Activated T-helper 1 cell treated with anti-CD3 and anti-CD28 coated beads, Interleukin-12 subunit alpha, Interleukin-12 subunit beta, Interleukin-2, Interleukin-4 antibody, amounts not matched to agents 30 ng/mL and 10 ng/mL and 1 ng/mL, durations not matched to agents 14 hours and 24 hours and 36 hours (primary cell): ENCODE measurements at regions of chr14 and their contacts with region 1.

Region 1: DNA sequence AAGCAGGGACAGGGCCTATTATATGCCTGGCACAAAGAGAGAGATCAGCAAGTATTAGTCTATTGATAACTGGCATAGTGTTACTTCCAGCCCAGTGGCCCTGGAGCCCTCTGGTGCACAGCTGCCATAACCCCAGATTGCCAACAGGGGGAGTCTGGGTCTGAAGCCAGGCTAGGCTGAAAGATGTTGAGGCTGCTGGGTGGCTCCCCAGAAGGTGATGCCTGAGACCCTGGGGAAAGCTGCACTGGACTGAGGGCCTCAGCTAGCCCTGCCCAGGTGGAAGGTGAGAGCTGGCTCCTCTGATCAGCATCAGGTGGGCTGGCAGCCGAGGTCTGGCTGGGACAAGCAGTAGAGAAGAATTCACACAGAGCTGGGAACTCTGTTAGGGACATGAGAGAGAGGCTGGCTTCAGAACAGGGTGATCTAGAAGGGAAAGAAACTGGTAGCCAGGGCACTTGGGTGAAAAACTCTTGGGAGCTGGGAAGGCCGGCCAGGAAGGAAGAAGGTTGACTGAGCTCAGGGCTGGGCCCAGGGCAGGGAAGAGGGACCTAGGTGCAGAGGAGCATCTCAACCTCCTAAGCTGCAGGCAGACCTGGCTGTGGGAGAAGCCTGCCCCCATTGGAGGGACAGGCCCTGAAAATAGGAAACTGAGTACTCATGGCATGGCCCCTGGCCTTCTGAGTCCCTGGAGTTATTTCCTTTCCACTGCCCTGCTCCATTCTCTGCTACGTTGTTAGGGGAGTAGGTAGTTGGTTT is 3.9 kb downstream of the GZMH start:
- DNase-seq: peak; percentile 60
- H3K4me3 Mint-ChIP-seq: peak overlapping the region; percentile 82
- H3K27ac Mint-ChIP-seq: peak overlapping the region; percentile 93
- H3K4me1 Mint-ChIP-seq: peaks cover 54% of the 10 kb centered on the region
- H3K27me3 Mint-ChIP-seq: peaks cover 1% of the 10 kb centered on the region

Region 2: GRCh38 chr14:24481622-24482324 is 123.8 kb before region 1 on chr14:
- intact Hi-C with region 1: loop called (anchors 5 kb)
- DNase-seq: peak; percentile 34
- H3K4me3 Mint-ChIP-seq: peak overlapping the region; percentile 61
- H3K27ac Mint-ChIP-seq: peak overlapping the region; percentile 57
- H3K4me1 Mint-ChIP-seq: peaks cover 22% of the 10 kb centered on the region
- H3K27me3 Mint-ChIP-seq: no peaks in the 10 kb centered on the region

Region 3: DNA sequence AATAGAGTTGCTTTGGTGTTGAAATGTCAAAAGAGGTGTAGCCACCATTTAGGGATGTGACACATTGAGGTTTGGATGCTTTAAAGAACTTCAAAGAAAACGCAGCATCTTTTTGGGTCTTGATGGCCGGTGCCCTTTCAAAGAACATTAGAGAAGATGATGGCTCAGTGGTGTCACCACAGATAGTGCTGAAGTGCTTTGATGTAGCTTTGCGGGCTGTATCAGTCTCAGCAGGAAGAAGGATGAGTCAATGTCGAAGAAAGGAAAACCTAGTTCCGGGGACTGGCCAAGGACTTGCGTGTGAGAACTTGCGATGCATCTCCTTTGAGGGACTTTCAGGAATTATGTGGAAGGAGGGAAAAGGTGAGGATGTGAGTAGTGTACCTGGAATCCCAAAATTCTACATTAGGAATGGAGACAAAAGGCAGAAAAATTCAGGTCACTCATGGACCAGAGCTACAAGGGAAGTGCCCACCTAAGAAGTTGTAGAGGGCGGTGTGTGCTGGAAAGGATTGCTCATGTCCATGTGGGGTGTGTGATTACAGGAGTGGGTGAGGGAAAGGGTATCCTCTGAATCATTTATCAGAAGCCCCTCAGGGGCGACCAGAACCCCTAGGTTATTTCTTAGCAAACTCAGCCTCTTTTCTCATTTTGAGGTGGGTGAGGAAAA is 68.1 kb after region 1 on chr14:
- intact Hi-C with region 1: loop called (anchors 1 kb)
- DNase-seq: peak; percentile 74
- H3K4me3 Mint-ChIP-seq: peak overlapping the region; percentile 77
- H3K27ac Mint-ChIP-seq: peak overlapping the region; percentile 98
- H3K4me1 Mint-ChIP-seq: peaks cover 89% of the 10 kb centered on the region
- H3K27me3 Mint-ChIP-seq: no peaks in the 10 kb centered on the region

Region 4: GRCh38 chr14:24690492-24690891 is 84.9 kb after region 1 on chr14:
- intact Hi-C with region 1: loop called (anchors 1 kb)
- DNase-seq: no peak
- H3K4me3 Mint-ChIP-seq: no peak overlapping the region
- H3K27ac Mint-ChIP-seq: no peak overlapping the region
- H3K4me1 Mint-ChIP-seq: peaks cover 49% of the 10 kb centered on the region
- H3K27me3 Mint-ChIP-seq: peaks cover 2% of the 10 kb centered on the region

Region 5: GRCh38 chr14:24806061-24806678 is 200.6 kb after region 1 on chr14:
- intact Hi-C with region 1: loop called (anchors 10 kb)
- DNase-seq: peak; percentile 5
- H3K4me3 Mint-ChIP-seq: no peak overlapping the region
- H3K27ac Mint-ChIP-seq: no peak overlapping the region
- H3K4me1 Mint-ChIP-seq: no peaks in the 10 kb centered on the region
- H3K27me3 Mint-ChIP-seq: peaks cover 5% of the 10 kb centered on the region

Region 6: DNA sequence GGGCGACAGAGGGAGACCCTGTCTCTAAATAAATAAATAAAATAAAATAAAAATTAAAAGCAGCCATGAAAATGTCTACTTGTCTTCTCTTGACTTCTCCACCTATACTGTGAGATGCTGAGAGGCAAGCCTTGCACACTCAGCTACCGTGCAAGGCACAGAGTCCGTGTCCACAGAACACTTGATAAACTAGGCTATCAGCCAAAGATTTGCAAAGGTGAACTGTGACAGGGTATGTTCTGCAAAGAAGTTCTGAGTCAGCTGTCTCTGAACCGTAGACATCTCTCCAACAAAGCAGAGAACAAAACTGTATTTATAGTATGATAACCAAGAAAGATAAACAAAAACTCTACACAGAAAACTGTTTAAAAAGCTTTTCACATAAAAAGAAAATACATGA is 408.8 kb after region 1 on chr14:
- intact Hi-C with region 1: no loop called
- DNase-seq: no peak
- H3K4me3 Mint-ChIP-seq: no peak overlapping the region
- H3K27ac Mint-ChIP-seq: no peak overlapping the region
- H3K4me1 Mint-ChIP-seq: no peaks in the 10 kb centered on the region
- H3K27me3 Mint-ChIP-seq: no peaks in the 10 kb centered on the region